T-cell (primary cell): ENCODE measurements at regions of chrX and their contacts with region 1.

Region 1: GRCh38 chrX:76454456-76454927 is 27.0 kb downstream of the MAGEE1 start:
- DNase-seq: peak in 7 of 35 experiments; percentile 0 to 54 (median 2)
- ATAC-seq: peak in 3 of 4 experiments; percentile 29 to 56 (median 49)
- H3K4me3 ChIP-seq: no peak overlapping the region
- H3K4me3 Mint-ChIP-seq: no peak overlapping the region
- H3K27ac ChIP-seq: no peak overlapping the region
- H3K27ac Mint-ChIP-seq: no peak overlapping the region
- H3K4me1 ChIP-seq: no peaks in the 10 kb centered on the region
- H3K4me1 Mint-ChIP-seq: peaks cover 0 to 6% (median 3%) of the 10 kb centered on the region in 3 donors
- H3K27me3 ChIP-seq: no peaks in the 10 kb centered on the region
- H3K27me3 Mint-ChIP-seq: peaks cover 0 to 5% of the 10 kb centered on the region in 2 donors

Region 2: DNA sequence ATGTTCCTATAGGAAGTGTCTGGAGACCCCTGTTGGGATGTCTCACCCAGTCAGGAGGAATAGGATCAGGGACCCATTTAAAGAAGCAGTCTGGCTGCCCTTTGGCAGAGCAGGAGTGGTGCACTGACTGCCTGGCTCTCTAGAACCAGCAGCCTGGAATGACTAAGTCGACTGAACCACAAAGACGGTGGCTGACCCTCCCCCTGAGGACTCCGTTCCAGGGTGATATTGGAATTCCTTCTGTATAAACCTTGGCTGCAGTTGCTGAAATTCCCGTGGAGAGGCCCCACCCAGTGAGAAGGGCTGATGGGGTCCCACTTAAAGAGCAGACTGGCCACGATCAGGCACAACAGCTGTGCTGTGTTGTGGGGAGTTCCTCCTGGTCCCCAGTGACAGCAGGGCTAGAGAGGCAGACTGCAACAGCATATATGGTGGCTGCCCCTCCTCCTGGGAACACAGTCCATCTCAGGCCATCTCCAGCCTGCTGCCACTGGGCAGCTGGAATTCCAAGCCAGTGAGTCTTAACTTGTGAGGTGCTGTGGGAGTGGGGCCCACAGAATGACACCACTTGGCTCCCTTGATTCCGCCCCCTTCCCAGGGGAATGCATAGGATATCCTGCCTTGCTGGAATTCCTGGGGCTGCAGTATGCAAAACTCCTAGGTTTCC is 1798.3 kb before region 1 on chrX:
- CTCF ChIA-PET with region 1: no interaction called
- POLR2A ChIA-PET with region 1: no interaction called
- DNase-seq: no peak
- ATAC-seq: no peak
- H3K4me3 ChIP-seq: no peak overlapping the region
- H3K4me3 Mint-ChIP-seq: no peak overlapping the region
- H3K27ac ChIP-seq: no peak overlapping the region
- H3K27ac Mint-ChIP-seq: no peak overlapping the region
- H3K4me1 ChIP-seq: no peaks in the 10 kb centered on the region
- H3K4me1 Mint-ChIP-seq: no peaks in the 10 kb centered on the region
- H3K27me3 ChIP-seq: peaks cover 0 to 12% of the 10 kb centered on the region in 2 experiments
- H3K27me3 Mint-ChIP-seq: peaks cover 4 to 34% of the 10 kb centered on the region in 2 donors

Region 3: DNA sequence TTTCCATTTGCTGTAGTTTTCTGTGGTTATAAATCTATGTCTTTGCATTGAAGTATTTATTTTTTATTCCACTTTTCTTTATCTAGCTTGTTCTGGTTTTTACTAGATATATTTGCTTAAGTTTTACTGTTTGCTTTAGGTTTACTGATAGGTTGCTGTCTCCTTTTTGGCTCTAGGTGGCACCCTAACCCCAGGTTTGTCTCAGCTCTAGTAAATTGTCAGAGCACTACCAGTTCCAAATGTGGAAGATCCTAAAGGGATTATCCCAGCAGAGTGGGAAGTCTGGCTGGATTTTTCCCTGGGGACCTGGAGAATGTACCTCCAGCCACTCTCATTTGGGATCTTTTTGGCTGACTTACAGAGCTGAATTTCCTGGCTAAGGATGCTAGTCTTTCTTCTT is 175.5 kb before region 1 on chrX:
- CTCF ChIA-PET with region 1: interaction called, 17 to 33 read pairs
- POLR2A ChIA-PET with region 1: no interaction called
- DNase-seq: peak in 29 of 35 experiments; percentile 2 to 67 (median 20)
- ATAC-seq: no peak
- H3K4me3 ChIP-seq: no peak overlapping the region
- H3K4me3 Mint-ChIP-seq: no peak overlapping the region
- H3K27ac ChIP-seq: no peak overlapping the region
- H3K27ac Mint-ChIP-seq: no peak overlapping the region
- H3K4me1 ChIP-seq: no peaks in the 10 kb centered on the region
- H3K4me1 Mint-ChIP-seq: no peaks in the 10 kb centered on the region
- H3K27me3 ChIP-seq: no peaks in the 10 kb centered on the region
- H3K27me3 Mint-ChIP-seq: peaks cover 0 to 8% of the 10 kb centered on the region in 2 donors